Activated T-helper 1 cell treated with anti-CD3 and anti-CD28 coated beads, Interleukin-12 subunit alpha, Interleukin-12 subunit beta, Interleukin-2, Interleukin-4 antibody, amounts not matched to agents 30 ng/mL and 10 ng/mL and 1 ng/mL, durations not matched to agents 14 hours and 24 hours and 36 hours (primary cell): ENCODE measurements at regions of chr22 and their contacts with region 1.

Region 1: GRCh38 chr22:21629262-21630149 is at the start of gene YDJC:
- DNase-seq: peak; percentile 93
- H3K4me3 Mint-ChIP-seq: peak within 1 kb of the TSS; percentile 91
- H3K27ac Mint-ChIP-seq: peak within 1 kb of the TSS; percentile 92
- H3K4me1 Mint-ChIP-seq: peaks cover 28% of the 10 kb centered on the region
- H3K27me3 Mint-ChIP-seq: no peaks in the 10 kb centered on the region
- total RNA-seq, gene YDJC: 51.7 and 51.8 TPM in 2 replicates

Region 2: DNA sequence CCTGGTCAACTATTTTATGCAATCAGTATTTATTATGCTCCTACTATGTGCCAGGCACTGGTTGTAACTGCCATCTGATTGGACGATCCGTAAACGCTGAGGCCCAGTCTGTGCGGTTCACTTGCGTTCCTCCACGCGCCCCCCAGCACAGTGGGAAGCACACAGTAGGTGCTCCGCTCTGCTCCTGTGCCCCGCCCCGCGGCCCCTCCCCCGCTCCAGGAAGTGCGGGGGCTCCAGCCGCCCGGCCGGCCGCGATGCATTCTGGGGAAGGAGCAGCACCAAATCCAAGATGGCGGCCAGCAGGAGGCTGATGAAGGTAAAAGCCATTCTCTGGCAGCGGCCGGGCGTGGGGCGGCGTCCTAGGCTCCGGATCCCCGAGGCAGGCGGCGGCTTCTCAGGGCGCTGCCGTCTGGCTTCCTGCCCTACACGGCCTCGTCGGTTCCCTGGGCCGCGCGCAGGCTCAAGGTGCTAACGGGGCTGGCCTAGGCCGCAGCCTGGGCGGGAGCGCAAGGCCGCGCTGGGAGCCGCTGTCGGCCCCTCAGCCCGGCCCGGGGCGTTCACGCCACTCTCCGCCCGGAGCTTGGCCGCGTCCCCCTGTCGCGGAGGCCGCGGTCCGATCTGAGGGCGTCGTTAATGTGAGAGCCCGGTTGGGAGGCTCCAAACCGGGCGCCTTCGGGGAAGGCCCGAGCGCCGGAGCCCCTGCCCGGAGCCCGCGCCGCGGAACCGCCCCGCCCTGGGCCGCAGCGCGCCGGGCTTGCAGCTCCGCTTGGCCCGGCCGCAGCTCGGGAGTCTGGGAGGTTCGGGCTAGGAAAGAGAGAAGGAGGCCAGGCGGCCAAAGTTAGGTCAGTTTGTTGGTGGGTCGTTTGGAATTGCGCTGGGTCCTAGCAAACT is 61.8 kb before region 1 on chr22 and contains the start of gene UBE2L3:
- intact Hi-C with region 1: loop called (anchors 1 kb)
- DNase-seq: peak; percentile 80
- H3K4me3 Mint-ChIP-seq: peak within 1 kb of the TSS; percentile 96
- H3K27ac Mint-ChIP-seq: peak within 1 kb of the TSS; percentile 95
- H3K4me1 Mint-ChIP-seq: peaks cover 40% of the 10 kb centered on the region
- H3K27me3 Mint-ChIP-seq: no peaks in the 10 kb centered on the region
- total RNA-seq, gene UBE2L3: 58.3 and 62.4 TPM in 2 replicates